CD4-positive, alpha-beta T cell (primary cell): ENCODE measurements at regions of chr2 and their contacts with region 1.

Region 1: GRCh38 chr2:120007851-120008250 is 5.0 kb upstream of the EPB41L5 start:
- DNase-seq: no peak
- ATAC-seq: no peak
- H3K4me3 ChIP-seq: no peak overlapping the region
- H3K4me3 Mint-ChIP-seq: no peak overlapping the region
- H3K27ac ChIP-seq: no peak overlapping the region
- H3K27ac Mint-ChIP-seq: no peak overlapping the region
- H3K4me1 ChIP-seq: peaks cover 8% of the 10 kb centered on the region
- H3K4me1 Mint-ChIP-seq: peaks cover 8% of the 10 kb centered on the region
- H3K27me3 ChIP-seq: no peaks in the 10 kb centered on the region
- H3K27me3 Mint-ChIP-seq: no peaks in the 10 kb centered on the region
- CTCF ChIP-seq: no peak

Region 2: DNA sequence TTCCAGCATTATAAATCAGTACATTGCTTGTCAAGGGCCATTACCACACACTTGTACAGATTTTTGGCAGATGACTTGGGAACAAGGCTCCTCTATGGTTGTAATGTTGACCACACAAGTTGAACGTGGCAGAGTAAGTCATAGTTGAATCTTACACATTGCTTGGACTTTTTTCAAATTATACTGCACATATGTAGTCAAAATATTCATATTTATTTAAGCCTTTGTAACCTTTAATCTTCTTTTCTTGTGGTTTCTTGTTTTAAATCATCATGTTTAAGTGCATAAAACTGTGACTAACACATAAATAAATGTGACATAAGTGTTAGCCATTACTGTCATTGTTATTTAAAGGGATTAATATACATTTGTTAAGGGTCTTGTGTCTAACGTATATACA is 47.0 kb before region 1 on chr2:
- CTCF ChIA-PET with region 1: no interaction called
- POLR2A ChIA-PET with region 1: interaction called, 3 read pairs
- intact Hi-C with region 1: loop called in 1 of 2 experiments (anchors 1 kb)
- DNase-seq: no peak
- ATAC-seq: no peak
- H3K4me3 ChIP-seq: no peak overlapping the region
- H3K4me3 Mint-ChIP-seq: no peak overlapping the region
- H3K27ac ChIP-seq: no peak overlapping the region
- H3K27ac Mint-ChIP-seq: no peak overlapping the region
- H3K4me1 ChIP-seq: no peaks in the 10 kb centered on the region
- H3K4me1 Mint-ChIP-seq: no peaks in the 10 kb centered on the region
- H3K27me3 ChIP-seq: no peaks in the 10 kb centered on the region
- H3K27me3 Mint-ChIP-seq: no peaks in the 10 kb centered on the region
- CTCF ChIP-seq: no peak